ENCODE measurements at regions of chr5 and their contacts with region 1.

Region 1: DNA sequence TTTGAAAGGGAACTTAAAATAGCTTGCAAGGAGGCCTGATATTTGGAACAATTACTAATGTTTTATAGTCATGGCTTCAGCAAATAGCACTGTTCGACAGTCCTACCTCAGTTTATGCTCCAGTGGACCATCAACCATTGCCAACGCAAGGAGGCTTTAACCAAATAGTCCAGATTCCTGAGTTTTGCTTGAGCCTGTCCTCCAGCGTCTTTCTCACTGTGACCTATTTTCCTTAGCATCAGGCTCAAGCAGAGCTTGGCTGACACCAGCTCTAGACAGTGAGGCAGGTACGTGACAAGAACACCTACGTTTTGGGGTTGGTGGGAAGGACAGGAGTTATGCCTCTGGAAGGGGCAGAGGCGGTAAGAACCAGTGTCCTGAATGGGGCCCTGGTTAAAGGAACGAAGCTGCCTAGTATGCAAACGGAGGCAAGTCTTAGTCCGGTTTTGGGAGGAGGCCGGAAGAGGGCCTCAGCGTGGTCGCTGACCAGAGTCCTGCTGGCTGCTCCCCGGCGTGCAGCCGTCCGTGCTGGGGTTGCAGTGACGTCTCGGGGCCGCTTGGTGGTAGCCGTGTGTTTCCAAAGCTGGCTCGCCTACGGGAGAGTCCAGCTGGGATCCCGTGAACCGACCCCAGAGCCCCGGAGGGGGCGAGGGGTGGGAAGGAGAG is 998 bp upstream of the FGF18 start:
- DNase-seq: peak; percentile 87 to 94
- ATAC-seq: peak; percentile 93
- H3K4me3 ChIP-seq: no peak overlapping the region
- H3K27ac ChIP-seq: no peak overlapping the region
- H3K4me1 ChIP-seq: no peaks in the 10 kb centered on the region
- H3K27me3 ChIP-seq: no peaks in the 10 kb centered on the region

Region 2: GRCh38 chr5:171484460-171484899 is 66.0 kb after region 1 on chr5:
- intact Hi-C with region 1: loop called (anchors 5 kb)
- DNase-seq: no peak
- ATAC-seq: peak; percentile 56
- H3K4me3 ChIP-seq: no peak overlapping the region
- H3K27ac ChIP-seq: no peak overlapping the region
- H3K4me1 ChIP-seq: no peaks in the 10 kb centered on the region
- H3K27me3 ChIP-seq: no peaks in the 10 kb centered on the region

Region 3: GRCh38 chr5:171549274-171549673 is 130.8 kb after region 1 on chr5:
- intact Hi-C with region 1: no loop called
- DNase-seq: no peak
- ATAC-seq: peak; percentile 57
- H3K4me3 ChIP-seq: no peak overlapping the region
- H3K27ac ChIP-seq: no peak overlapping the region
- H3K4me1 ChIP-seq: no peaks in the 10 kb centered on the region
- H3K27me3 ChIP-seq: no peaks in the 10 kb centered on the region

Region 4: DNA sequence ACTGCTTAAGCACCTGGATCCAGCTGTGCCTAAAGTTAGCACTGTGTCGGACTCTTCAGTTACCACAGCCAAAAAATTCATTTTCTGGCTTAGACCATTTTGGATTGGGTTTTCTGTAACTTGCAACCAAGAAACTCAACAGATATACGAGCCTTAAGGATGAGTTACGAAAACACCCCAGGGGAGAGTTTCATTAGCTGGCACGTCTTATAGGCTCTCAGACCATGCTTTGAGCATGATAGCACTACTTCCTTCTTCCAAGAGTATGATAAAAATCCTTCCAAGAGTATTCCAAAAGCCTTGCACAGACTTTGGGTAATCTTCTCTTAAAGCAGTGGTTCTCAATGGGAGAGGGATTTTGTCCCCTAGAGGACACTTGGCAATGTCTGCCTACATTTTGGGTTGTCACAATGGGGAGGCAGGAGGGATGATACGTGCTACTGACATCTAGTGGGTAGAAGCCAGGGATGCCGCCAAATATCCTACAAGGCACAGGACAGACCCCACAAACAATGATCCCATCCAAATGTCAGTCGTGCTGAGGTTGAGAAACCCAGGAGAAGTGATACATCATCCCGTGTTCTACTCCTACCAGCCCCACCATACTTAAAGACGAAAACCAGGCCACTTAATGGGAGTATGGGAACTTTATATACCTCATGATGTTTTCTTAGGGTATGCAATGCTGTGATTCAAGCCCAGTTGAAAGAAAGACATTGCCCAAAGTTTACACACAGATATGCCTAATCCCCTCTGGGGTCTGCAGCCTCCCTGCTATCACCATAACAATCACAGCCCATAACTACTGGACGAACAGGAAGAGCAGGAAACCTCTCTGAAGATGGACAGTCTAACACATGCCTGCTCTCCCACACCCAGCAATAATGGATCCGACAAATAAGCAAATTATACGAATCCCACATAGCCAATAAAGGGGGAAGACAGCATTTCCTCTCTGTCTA is 432.2 kb after region 1 on chr5:
- intact Hi-C with region 1: loop called in 1 of 2 experiments (anchors 5 kb)
- DNase-seq: no peak
- ATAC-seq: peak; percentile 64
- H3K4me3 ChIP-seq: no peak overlapping the region
- H3K27ac ChIP-seq: no peak overlapping the region
- H3K4me1 ChIP-seq: no peaks in the 10 kb centered on the region
- H3K27me3 ChIP-seq: no peaks in the 10 kb centered on the region

Region 5: DNA sequence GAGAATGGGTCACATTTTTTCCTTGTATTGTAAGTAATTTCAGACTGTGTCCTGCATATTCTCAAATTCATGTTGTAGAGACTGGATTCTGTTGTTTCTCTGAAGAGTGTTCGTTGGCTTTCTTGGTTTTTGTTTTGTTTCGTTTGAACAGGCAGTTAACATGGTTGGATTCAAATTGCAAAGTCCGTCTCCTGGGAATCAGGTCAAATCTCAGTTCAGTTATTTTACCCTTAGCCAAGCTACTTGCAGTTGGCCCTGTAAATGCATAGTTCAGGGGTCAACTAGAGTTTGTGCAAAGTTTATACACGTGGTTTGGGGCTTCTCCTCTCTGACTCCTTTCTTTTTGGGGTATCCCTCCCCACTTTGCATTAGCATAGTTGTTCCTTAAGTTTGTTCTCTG is 609.7 kb after region 1 on chr5:
- intact Hi-C with region 1: loop called in 1 of 2 experiments (anchors 10 kb)
- DNase-seq: no peak
- ATAC-seq: no peak
- H3K4me3 ChIP-seq: no peak overlapping the region
- H3K27ac ChIP-seq: no peak overlapping the region
- H3K4me1 ChIP-seq: no peaks in the 10 kb centered on the region
- H3K27me3 ChIP-seq: no peaks in the 10 kb centered on the region

Region 6: DNA sequence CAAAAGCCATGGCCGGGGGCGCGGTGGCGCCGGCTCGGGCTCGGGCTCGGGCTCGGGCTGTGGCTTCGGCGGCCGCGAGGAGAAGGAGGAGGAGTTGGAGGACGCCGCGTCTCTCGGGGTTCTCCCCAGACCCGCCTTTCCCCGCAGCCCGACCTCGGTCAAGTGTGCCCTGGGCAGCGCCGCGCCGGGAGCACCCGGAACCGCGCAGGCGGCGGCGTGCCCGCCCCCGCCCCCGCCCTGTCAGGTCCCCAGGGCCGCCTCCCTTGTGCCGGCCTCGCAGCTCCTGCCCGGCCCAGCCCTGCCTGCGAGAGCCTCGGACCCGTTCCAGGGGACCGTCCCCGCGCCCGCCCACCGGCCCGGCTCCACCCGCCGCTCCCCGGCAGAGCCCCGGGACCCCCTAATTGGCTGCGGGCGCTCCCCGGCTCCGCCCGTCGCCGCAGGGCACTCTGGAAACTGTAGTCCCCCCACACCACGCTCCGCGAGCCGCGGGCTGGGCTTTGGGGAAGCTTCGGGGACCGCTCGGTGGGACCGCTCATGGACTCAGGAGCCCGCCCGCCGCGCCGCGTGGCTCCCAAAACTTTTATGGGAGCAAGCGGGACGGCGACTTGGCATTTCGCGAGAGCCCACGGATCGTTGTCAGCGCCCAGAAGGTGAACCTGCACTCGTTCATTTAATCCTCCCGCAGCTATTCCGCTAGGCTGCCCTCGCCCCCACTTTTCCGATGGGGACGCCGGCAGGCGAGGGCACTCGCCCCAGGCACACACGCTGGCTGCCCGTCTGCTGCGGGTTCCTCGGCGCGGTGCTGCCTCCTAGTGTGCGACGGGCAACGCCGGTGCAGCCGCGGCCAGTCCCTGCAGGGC is 769.8 kb after region 1 on chr5 and contains the start of gene STK10:
- intact Hi-C with region 1: loop called in 1 of 2 experiments (anchors 10 kb)
- DNase-seq: peak; percentile 97 to 98
- ATAC-seq: peak; percentile 97
- H3K4me3 ChIP-seq: peak within 1 kb of the TSS; percentile 43 to 64
- H3K27ac ChIP-seq: peak within 1 kb of the TSS in 1 of 2 donors; percentile 14
- H3K4me1 ChIP-seq: no peaks in the 10 kb centered on the region
- H3K27me3 ChIP-seq: no peaks in the 10 kb centered on the region
- total RNA-seq, gene STK10: 32.5 to 67.7 TPM

Measured in aorta (tissue), 5 donors.